Ascending aorta (tissue), 2 donors: ENCODE measurements at regions of chr4 and their contacts with region 1.

Region 1: DNA sequence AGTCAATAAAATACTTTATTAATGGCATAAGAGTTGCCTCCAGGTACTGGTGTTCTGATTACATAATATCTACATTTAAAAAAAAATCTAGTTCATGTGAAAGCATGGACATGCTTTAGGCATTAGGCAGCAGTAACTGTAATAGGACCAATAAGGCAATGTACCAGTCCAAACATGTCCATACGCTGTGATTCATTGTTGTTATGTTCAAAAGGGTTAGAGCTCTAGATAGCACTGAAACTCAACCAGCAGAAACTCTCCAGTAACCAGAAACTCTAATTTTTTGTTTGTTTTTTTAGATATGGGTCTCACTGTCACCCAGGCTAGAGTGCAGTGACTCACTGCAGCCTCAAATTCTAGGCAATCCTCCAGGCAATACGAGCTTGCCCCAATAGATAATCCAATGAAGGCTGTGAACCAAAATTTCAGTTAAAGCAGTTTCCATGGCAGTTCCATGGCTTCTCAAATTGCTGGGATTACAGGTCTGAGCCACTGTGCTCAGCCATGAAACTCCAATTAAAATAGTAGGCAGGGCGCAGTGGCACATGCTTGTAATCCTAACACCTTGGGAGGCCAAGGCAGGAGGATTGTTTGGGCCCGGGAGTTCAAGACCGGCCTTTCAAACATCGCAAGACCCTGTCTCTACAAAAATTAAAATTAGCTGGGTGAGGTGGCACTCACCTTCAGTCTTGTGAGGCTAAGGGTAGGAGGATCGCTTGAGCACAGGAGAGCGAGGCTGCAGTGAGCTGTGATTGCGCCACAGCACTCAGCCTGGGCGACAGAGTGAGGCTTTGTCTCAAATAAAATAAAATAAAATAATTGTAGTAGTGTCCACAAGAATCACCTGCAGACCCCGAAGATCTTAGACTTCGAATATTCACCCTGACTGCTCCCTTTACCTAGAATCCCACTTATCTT is 36.3 kb downstream of the MGARP start:
- DNase-seq: peak in 1 of 2 donors; percentile 80
- H3K4me3 ChIP-seq: peak overlapping the region in 1 of 2 donors; percentile 7
- H3K27ac ChIP-seq: peak overlapping the region; percentile 78 to 90
- H3K4me1 ChIP-seq: peaks cover 4 to 20% of the 10 kb centered on the region in 2 donors
- H3K27me3 ChIP-seq: no peaks in the 10 kb centered on the region
- CTCF ChIP-seq: no peak

Region 2: DNA sequence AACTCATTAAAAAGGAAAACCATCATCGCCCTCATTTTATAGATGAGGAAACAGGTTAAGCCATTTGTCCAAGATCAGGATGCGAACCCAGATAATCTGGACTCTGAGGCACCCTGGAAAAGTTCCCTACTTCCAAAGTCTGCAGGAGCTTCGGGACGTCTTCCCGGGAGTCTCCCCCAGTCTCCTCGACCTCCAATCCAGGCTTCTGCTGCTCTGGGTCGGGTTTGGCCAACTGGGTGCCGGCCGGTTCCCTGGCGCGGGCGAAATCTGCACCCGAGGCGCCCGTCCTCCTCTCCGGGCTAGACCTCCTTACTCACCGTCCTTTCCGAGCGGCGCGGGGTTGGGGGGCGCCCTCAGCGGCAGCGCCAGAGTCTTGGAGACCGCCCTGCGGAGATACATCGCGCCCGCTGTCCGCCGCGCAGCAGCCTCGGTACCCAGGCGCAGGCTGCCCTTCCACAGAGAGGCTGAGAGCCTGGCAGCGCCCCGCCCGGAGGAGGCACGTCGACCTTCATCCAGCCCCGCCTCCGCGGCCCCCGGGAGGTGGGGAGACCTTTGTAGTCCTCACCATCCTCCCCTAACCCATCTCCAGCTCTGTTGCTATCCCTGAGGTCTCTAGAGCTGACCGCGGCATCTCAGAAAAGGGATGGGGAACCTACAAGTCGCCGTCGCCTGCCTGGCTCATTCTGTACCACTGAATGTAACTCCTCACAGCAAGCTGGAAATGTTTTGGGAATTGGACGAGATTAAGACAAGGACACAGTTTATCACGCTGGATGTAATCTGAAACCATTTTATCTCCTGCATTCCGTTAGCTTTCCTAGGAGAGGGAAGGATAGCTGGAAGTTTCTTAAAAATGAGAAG is 36.3 kb after region 1 on chr4 and contains the start of gene MGARP:
- intact Hi-C with region 1: loop called (anchors 5 kb)
- DNase-seq: peak in 1 of 2 donors; percentile 68
- H3K4me3 ChIP-seq: peak within 1 kb of the TSS; percentile 69 to 78
- H3K27ac ChIP-seq: peak within 1 kb of the TSS; percentile 42 to 48
- H3K4me1 ChIP-seq: peaks cover 0 to 2% of the 10 kb centered on the region in 2 donors
- H3K27me3 ChIP-seq: no peaks in the 10 kb centered on the region
- CTCF ChIP-seq: no peak
- total RNA-seq, gene MGARP: 2.8 TPM

Region 3: GRCh38 chr4:139301113-139301820 is 57.6 kb after region 1 on chr4 and contains the start of gene NAA15:
- intact Hi-C with region 1: loop called (anchors 1 kb)
- DNase-seq: peak; percentile 93 to 99
- H3K4me3 ChIP-seq: peak within 1 kb of the TSS; percentile 78 to 99
- H3K27ac ChIP-seq: peak within 1 kb of the TSS; percentile 92 to 95
- H3K4me1 ChIP-seq: peaks cover 3 to 34% of the 10 kb centered on the region in 2 donors
- H3K27me3 ChIP-seq: no peaks in the 10 kb centered on the region
- CTCF ChIP-seq: no peak
- total RNA-seq, gene NAA15: 6.4 TPM